HepG2 (cell line): ENCODE measurements at regions of chr4 and their contacts with region 1.

Region 1: GRCh38 chr4:124262211-124263179 is 450.0 kb downstream of the ANKRD50 start:
- DNase-seq: peak; percentile 53
- ATAC-seq: peak; percentile 91
- H3K4me3 ChIP-seq: no peak overlapping the region
- H3K27ac ChIP-seq: no peak overlapping the region
- H3K4me1 ChIP-seq: no peaks in the 10 kb centered on the region
- H3K27me3 ChIP-seq: no peaks in the 10 kb centered on the region
- CTCF ChIP-seq: peak; percentile 79
- EP300 ChIP-seq: no peak
- POLR2A ChIP-seq: no peak
- RAD21 ChIP-seq: peak; percentile 59

Region 2: DNA sequence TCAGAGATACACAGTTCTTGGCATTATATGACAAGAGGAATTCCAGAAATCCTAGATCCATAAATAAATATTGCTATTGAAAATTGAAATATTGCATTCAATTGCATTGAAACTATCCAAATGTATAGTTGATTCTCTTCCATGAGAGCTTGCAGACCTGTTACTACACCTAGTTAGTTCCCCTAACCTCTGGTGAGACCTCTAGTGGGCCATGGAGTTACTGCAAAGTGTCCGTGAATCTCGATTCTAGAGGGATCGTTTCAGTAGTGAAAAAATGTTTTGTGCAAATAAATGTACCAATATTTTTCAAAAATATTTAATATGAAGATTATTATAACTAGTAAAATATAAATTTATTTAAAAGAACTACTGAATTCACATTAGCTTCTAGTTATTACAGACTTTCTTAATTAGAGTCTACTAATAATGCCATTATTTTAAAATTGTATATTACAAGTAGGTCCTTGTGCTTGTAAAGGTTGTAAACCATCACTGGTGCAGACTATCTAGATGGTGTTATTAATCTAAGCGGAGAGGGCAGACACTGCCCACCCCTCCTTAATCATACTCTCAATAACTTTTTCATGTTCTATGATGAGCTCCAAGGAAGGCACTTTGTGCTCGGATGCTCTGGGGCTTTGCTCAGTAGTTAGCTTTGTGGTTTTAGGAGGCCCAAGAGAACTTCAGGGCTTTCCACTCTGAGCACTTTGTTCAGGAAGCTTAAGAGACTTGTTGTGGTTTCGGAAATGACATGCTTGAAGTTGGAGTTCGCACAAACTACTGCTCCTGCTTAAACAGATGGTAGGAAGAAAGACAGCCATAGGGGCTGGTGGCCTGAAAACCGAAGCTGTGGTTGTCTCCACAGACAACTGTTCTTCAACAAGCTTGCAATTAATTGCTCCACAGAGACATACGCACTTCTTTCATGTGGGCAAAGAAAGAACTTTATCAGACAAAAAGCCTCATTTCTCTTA is 1684.4 kb before region 1 on chr4:
- CTCF ChIA-PET with region 1: no interaction called
- POLR2A ChIA-PET with region 1: no interaction called
- in situ Hi-C with region 1: no loop called
- intact Hi-C with region 1: loop called (anchors 1 kb)
- DNase-seq: peak; percentile 41
- ATAC-seq: peak; percentile 88
- H3K4me3 ChIP-seq: no peak overlapping the region
- H3K27ac ChIP-seq: no peak overlapping the region
- H3K4me1 ChIP-seq: no peaks in the 10 kb centered on the region
- H3K27me3 ChIP-seq: no peaks in the 10 kb centered on the region
- CTCF ChIP-seq: peak; percentile 63
- EP300 ChIP-seq: no peak
- POLR2A ChIP-seq: no peak
- RAD21 ChIP-seq: no peak

Region 3: DNA sequence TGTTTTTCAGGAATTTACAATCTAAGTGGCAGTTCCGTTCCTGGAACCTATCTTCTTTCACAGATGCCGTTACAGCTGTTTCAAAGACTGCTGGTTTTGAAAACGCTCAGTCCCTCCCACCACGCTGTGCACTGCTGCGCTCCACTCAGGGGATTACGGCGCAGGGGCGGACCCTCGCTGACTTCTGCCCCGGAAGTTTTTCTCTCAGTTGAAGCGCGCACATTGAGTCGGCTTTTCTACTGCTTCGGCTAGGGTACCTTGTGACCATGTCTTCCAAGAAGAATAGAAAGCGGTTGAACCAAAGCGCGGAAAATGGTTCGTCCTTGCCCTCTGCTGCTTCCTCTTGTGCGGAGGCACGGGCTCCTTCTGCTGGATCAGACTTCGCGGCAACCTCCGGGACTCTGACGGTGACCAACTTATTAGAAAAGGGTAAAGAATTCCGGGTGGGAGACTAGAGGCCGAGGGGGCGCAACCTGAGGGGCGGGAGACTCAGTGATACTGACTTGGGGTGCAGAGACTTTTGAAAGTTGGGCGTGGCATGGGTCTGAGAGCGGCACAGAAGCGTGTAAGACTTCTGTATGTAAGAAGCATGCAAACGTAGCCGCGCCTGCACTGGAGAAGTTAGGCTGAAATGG is 1339.5 kb before region 1 on chr4:
- CTCF ChIA-PET with region 1: no interaction called
- POLR2A ChIA-PET with region 1: no interaction called
- in situ Hi-C with region 1: no loop called
- intact Hi-C with region 1: loop called (anchors 10 kb)
- DNase-seq: peak; percentile 75
- ATAC-seq: peak; percentile 97
- H3K4me3 ChIP-seq: peak overlapping the region; percentile 89 to 95 (median 92)
- H3K27ac ChIP-seq: peak overlapping the region; percentile 89
- H3K4me1 ChIP-seq: peaks cover 42% of the 10 kb centered on the region
- H3K27me3 ChIP-seq: no peaks in the 10 kb centered on the region; a peak in 1 of 5 replicates
- CTCF ChIP-seq: no peak
- EP300 ChIP-seq: peak; percentile 17 to 45; a peak in 2 of 4 replicates
- POLR2A ChIP-seq: peak; percentile 45 to 55; a peak in 1 of 4 replicates
- RAD21 ChIP-seq: no peak

Region 4: GRCh38 chr4:123102897-123103471 is 1159.5 kb before region 1 on chr4:
- CTCF ChIA-PET with region 1: interaction called, 4 read pairs
- POLR2A ChIA-PET with region 1: no interaction called
- in situ Hi-C with region 1: loop called (anchors 10 kb)
- intact Hi-C with region 1: loop called (anchors 5 kb)
- DNase-seq: peak; percentile 49
- ATAC-seq: peak; percentile 77
- H3K4me3 ChIP-seq: no peak overlapping the region
- H3K27ac ChIP-seq: no peak overlapping the region
- H3K4me1 ChIP-seq: no peaks in the 10 kb centered on the region
- H3K27me3 ChIP-seq: no peaks in the 10 kb centered on the region
- CTCF ChIP-seq: peak; percentile 69
- EP300 ChIP-seq: no peak
- POLR2A ChIP-seq: no peak
- RAD21 ChIP-seq: peak; percentile 69; the same call in 1 of the 2 replicates

Region 5: GRCh38 chr4:123750044-123750443 is 512.5 kb before region 1 on chr4:
- CTCF ChIA-PET with region 1: no interaction called
- POLR2A ChIA-PET with region 1: no interaction called
- in situ Hi-C with region 1: loop called (anchors 25 kb)
- intact Hi-C with region 1: no loop called
- DNase-seq: peak; percentile 87
- ATAC-seq: peak; percentile 98
- H3K4me3 ChIP-seq: peak overlapping the region in 1 of 3 experiments; percentile 4; a peak in 2 of 6 replicates
- H3K27ac ChIP-seq: peak overlapping the region; percentile 2
- H3K4me1 ChIP-seq: peaks cover 19% of the 10 kb centered on the region
- H3K27me3 ChIP-seq: no peaks in the 10 kb centered on the region
- CTCF ChIP-seq: 0 out of 2 replicates have a peak, but pooled peaks have one; percentile 8
- EP300 ChIP-seq: peak in 1 of 2 experiments; percentile 39; a peak in 1 of 4 replicates
- POLR2A ChIP-seq: no peak
- RAD21 ChIP-seq: no peak

Region 6: GRCh38 chr4:124104101-124104500 is 158.4 kb before region 1 on chr4:
- CTCF ChIA-PET with region 1: no interaction called
- POLR2A ChIA-PET with region 1: no interaction called
- in situ Hi-C with region 1: no loop called
- intact Hi-C with region 1: loop called (anchors 5 kb)
- DNase-seq: no peak
- ATAC-seq: no peak; the same call in 2 of the 3 replicates
- H3K4me3 ChIP-seq: no peak overlapping the region
- H3K27ac ChIP-seq: no peak overlapping the region
- H3K4me1 ChIP-seq: no peaks in the 10 kb centered on the region
- H3K27me3 ChIP-seq: no peaks in the 10 kb centered on the region
- CTCF ChIP-seq: no peak
- EP300 ChIP-seq: no peak
- POLR2A ChIP-seq: no peak
- RAD21 ChIP-seq: no peak

Region 7: DNA sequence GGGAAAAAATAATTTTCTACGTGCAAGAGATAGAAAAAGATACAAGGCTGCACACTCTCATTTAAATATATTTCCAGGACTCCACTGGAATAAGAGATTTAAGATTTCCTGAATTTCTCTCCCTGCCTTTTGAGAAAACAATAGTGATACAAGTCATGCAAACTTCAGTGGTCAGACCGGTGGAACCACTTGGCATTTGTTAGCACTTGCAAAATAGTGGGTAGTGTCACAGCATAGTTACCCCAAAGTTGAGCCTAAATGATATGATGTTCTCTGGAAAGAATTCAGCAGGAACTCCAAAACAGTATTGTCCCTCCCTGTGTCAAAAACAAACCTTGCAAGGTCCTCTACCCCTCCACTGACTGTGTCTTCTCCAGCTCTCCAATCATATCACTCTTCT is 347.7 kb after region 1 on chr4:
- CTCF ChIA-PET with region 1: no interaction called
- POLR2A ChIA-PET with region 1: no interaction called
- in situ Hi-C with region 1: no loop called
- intact Hi-C with region 1: no loop called
- DNase-seq: no peak
- ATAC-seq: no peak
- H3K4me3 ChIP-seq: no peak overlapping the region
- H3K27ac ChIP-seq: no peak overlapping the region
- H3K4me1 ChIP-seq: no peaks in the 10 kb centered on the region
- H3K27me3 ChIP-seq: no peaks in the 10 kb centered on the region
- CTCF ChIP-seq: no peak
- EP300 ChIP-seq: no peak
- POLR2A ChIP-seq: no peak
- RAD21 ChIP-seq: no peak